ENCODE measurements at regions of chr22 and their contacts with region 1.

Region 1: DNA sequence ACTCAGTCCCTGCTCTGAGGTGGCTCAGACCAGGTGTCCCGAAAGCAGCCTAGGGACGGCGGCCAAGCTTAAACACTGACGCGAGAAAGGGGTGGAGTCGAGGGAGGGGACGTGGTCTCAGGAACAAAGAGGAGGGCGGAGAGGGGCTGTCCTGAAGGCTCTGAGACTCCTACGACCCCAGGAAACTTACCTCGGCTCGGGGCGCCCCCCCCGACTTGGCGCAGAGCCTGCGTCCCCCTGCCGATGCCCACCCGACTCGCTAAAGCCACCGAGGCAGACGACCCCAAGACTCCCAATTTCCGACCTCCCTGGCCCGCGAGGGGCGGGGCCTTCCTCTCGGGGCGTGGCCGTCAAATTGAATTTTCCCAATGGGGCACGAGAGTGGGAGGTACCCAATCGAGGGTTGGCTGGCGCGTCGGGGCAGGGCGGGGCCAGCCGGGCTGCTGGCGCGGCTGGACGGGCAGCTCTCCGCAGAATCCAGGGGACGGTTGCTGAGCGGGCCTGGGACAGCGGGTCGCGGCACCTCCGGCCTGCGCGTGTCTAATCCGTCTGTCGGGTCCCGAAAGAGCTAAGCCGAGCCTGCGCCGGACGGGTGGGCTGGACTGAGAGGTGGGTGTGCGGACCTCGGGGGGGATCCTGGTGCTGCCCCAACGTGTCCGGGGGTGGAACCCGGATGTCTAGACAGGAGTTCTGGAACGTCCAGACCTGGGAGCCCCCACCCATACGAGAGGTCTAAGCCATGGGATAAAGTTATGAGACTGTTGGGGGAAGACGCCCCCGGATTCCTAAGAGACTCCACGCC is at the start of gene SMTN:
- DNase-seq: peak; percentile 98
- H3K4me3 Mint-ChIP-seq: peak within 1 kb of the TSS; percentile 91
- H3K27ac Mint-ChIP-seq: peak within 1 kb of the TSS; percentile 78
- H3K4me1 Mint-ChIP-seq: peaks cover 35% of the 10 kb centered on the region
- H3K27me3 Mint-ChIP-seq: no peaks in the 10 kb centered on the region
- total RNA-seq, gene SMTN: 13.9 and 17.9 TPM in 2 replicates

Region 2: GRCh38 chr22:30763815-30764686 is 317.0 kb before region 1 on chr22:
- intact Hi-C with region 1: loop called (anchors 1 kb)
- DNase-seq: peak; percentile 85
- H3K4me3 Mint-ChIP-seq: no peak overlapping the region
- H3K27ac Mint-ChIP-seq: no peak overlapping the region
- H3K4me1 Mint-ChIP-seq: peaks cover 2% of the 10 kb centered on the region
- H3K27me3 Mint-ChIP-seq: no peaks in the 10 kb centered on the region

Region 3: GRCh38 chr22:30947816-30948454 is 133.1 kb before region 1 on chr22:
- intact Hi-C with region 1: loop called (anchors 1 kb)
- DNase-seq: no peak
- H3K4me3 Mint-ChIP-seq: no peak overlapping the region
- H3K27ac Mint-ChIP-seq: no peak overlapping the region
- H3K4me1 Mint-ChIP-seq: peaks cover 42% of the 10 kb centered on the region
- H3K27me3 Mint-ChIP-seq: no peaks in the 10 kb centered on the region

Region 4: GRCh38 chr22:30968924-30969539 is 112.0 kb before region 1 on chr22 and contains the start of gene TUG1:
- intact Hi-C with region 1: loop called (anchors 1 kb)
- DNase-seq: peak; percentile 99
- H3K4me3 Mint-ChIP-seq: peak within 1 kb of the TSS; percentile 98
- H3K27ac Mint-ChIP-seq: peak within 1 kb of the TSS; percentile 99
- H3K4me1 Mint-ChIP-seq: peaks cover 39% of the 10 kb centered on the region
- H3K27me3 Mint-ChIP-seq: peaks cover 4% of the 10 kb centered on the region
- total RNA-seq, gene TUG1: 68.1 and 69.1 TPM in 2 replicates

Region 5: GRCh38 chr22:30979932-30980331 is 101.1 kb before region 1 on chr22:
- intact Hi-C with region 1: no loop called
- DNase-seq: no peak
- H3K4me3 Mint-ChIP-seq: no peak overlapping the region
- H3K27ac Mint-ChIP-seq: no peak overlapping the region
- H3K4me1 Mint-ChIP-seq: peaks cover 6% of the 10 kb centered on the region
- H3K27me3 Mint-ChIP-seq: no peaks in the 10 kb centered on the region

Region 6: GRCh38 chr22:31107178-31107893 is 26.3 kb after region 1 on chr22 and contains the start of gene SELENOM:
- intact Hi-C with region 1: loop called (anchors 1 kb)
- DNase-seq: peak; percentile 97
- H3K4me3 Mint-ChIP-seq: peak within 1 kb of the TSS; percentile 87
- H3K27ac Mint-ChIP-seq: peak within 1 kb of the TSS; percentile 55
- H3K4me1 Mint-ChIP-seq: peaks cover 12% of the 10 kb centered on the region
- H3K27me3 Mint-ChIP-seq: peaks cover 2% of the 10 kb centered on the region
- total RNA-seq, gene SELENOM: 7.4 and 8.2 TPM in 2 replicates

Region 7: DNA sequence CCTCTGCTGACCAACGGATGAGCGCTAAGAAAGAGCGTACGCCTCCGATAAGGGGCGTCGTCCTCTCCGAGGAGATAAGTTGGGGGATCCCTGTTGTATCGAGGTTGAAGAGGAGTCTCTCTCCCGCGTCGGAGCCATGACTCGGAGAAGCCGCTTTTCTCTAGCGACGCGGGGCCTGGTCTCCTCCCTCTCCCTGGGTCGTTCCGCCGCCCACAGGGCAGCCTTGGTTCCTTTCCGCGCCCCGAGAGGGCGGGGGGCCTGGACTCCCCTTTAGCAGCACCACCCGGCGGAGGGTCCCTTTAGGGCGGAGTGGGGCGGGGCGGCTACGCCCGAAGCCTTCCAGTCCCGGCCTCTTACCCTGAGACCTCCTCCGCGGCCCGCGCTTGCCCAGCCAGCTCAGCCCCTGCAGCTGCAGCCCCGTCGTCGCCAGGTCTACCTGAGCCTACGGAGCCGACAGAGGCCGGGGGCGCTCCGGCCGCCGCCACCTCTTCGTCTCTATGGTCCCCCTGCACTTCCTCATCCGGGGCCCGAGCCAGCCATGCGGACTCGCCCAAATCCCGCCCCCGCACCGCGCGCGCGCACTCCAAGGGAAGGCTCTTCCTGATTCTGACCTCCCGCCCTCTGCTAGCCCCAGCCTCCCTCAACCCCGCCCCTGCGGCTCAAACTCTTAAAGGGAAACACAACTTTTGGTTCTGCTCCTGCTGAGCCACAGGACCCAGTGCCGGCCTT is 668.8 kb after region 1 on chr22 and contains the start of gene PRR14L:
- intact Hi-C with region 1: loop called (anchors 5 kb)
- DNase-seq: peak; percentile 100
- H3K4me3 Mint-ChIP-seq: peak within 1 kb of the TSS; percentile 99
- H3K27ac Mint-ChIP-seq: peak within 1 kb of the TSS; percentile 96
- H3K4me1 Mint-ChIP-seq: peaks cover 48% of the 10 kb centered on the region
- H3K27me3 Mint-ChIP-seq: peaks cover 2% of the 10 kb centered on the region
- total RNA-seq, gene PRR14L: 61.0 and 63.6 TPM in 2 replicates

Measured in activated CD4-positive, alpha-beta T cell treated with anti-CD3 and anti-CD28 coated beads, Interleukin-2, amount 10 ng/mL, durations not matched to agents 24 days and 14 days (primary cell).